Naive thymus-derived CD8-positive, alpha-beta T cell (primary cell): ENCODE measurements at regions of chr11 and their contacts with region 1.

Region 1: GRCh38 chr11:66081505-66081904 is 11.4 kb downstream of the PACS1 start:
- DNase-seq: peak; percentile 53 to 90 (median 77)
- ATAC-seq: peak; percentile 86 to 98
- H3K4me3 Mint-ChIP-seq: peak overlapping the region; percentile 75 to 94 (median 90)
- H3K27ac Mint-ChIP-seq: peak overlapping the region; percentile 93 to 100 (median 98)
- H3K4me1 Mint-ChIP-seq: peaks cover 46 to 97% (median 92%) of the 10 kb centered on the region in 4 donors
- H3K27me3 Mint-ChIP-seq: no peaks in the 10 kb centered on the region

Region 2: GRCh38 chr11:66051766-66052663 is 29.5 kb before region 1 on chr11 and contains the start of gene SF3B2:
- POLR2A ChIA-PET with region 1: interaction called, 11 read pairs
- DNase-seq: peak; percentile 88 to 97 (median 94)
- ATAC-seq: peak; percentile 95 to 97
- H3K4me3 Mint-ChIP-seq: peak within 1 kb of the TSS; percentile 98 to 100 (median 99)
- H3K27ac Mint-ChIP-seq: peak within 1 kb of the TSS; percentile 95 to 99 (median 98)
- H3K4me1 Mint-ChIP-seq: peaks cover 19 to 44% (median 37%) of the 10 kb centered on the region in 4 donors
- H3K27me3 Mint-ChIP-seq: peaks cover 0 to 5% (median 0%) of the 10 kb centered on the region in 5 donors
- polyA plus RNA-seq, gene SF3B2: 70.3 to 115 (median 91.6) TPM

Region 3: DNA sequence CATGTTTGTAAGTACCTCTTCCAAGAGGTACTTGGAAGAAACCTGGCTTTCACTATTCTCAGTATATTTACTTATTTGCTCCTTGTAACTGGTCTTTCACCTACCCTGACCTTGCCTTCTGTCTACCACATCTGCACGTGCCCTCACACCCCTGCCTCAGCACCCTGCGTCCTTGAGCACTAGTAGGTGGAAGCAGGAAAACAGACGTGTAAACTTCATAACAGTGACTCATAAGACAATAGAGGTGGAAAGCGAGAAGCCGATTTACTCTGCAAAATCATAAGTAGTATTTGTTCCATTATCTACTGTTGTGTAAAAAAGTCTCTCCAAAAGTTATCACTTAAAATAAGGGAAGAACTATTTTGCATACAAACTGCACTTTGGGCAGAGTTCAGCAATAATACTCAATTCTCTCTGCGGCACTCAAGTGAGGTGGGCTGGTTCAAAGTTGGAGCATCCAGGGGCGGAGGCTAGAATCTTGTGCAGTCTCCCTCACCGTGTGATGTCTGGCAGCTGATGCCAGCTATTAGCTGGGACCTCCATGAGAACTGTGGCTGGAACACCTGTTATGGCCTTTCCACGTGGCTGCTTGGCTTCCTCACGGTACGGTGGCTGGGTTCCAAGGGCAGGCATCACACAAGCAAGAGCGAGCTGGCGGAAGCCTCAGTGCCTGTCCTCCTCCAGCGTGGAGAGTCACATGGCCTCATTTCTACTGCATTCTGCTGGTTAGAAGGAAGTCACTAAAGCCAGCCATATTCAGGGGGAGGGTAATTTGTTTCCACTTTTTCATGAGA is 19.0 kb after region 1 on chr11:
- POLR2A ChIA-PET with region 1: interaction called, 91 read pairs
- DNase-seq: peak; percentile 48 to 85 (median 70)
- ATAC-seq: peak; percentile 94 to 98
- H3K4me3 Mint-ChIP-seq: peak overlapping the region; percentile 75 to 90 (median 86)
- H3K27ac Mint-ChIP-seq: peak overlapping the region; percentile 91 to 98 (median 95)
- H3K4me1 Mint-ChIP-seq: peaks cover 41 to 81% (median 72%) of the 10 kb centered on the region in 4 donors
- H3K27me3 Mint-ChIP-seq: no peaks in the 10 kb centered on the region

Region 4: DNA sequence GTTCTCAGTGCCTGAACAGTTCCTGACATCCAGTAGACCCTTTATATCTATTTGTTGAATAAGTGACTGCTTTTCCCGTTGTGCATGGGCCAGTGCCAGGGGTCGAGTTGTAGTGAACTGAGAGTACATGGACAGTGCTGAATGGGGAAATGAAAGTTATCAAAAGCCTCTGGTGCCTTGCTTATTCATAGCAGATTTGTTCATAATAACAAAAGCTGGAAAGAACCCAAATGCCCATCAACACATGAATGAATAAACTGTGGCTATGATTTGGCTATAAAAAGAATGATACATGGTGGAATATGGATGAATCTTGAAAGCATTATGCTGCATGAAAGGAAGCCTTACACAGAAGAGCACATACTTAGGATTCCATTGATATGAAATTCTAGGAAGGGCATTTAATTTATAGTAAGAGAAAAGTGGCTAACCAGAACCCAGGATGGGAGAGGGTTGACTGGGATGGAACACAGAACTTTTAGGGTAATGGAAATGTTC is 31.1 kb after region 1 on chr11:
- POLR2A ChIA-PET with region 1: interaction called, 27 read pairs
- DNase-seq: no peak
- ATAC-seq: no peak
- H3K4me3 Mint-ChIP-seq: peak overlapping the region in 8 of 10 donors; percentile 41 to 78 (median 69)
- H3K27ac Mint-ChIP-seq: peak overlapping the region; percentile 74 to 96 (median 86)
- H3K4me1 Mint-ChIP-seq: peaks cover 51 to 99% (median 96%) of the 10 kb centered on the region in 4 donors
- H3K27me3 Mint-ChIP-seq: no peaks in the 10 kb centered on the region

Region 5: DNA sequence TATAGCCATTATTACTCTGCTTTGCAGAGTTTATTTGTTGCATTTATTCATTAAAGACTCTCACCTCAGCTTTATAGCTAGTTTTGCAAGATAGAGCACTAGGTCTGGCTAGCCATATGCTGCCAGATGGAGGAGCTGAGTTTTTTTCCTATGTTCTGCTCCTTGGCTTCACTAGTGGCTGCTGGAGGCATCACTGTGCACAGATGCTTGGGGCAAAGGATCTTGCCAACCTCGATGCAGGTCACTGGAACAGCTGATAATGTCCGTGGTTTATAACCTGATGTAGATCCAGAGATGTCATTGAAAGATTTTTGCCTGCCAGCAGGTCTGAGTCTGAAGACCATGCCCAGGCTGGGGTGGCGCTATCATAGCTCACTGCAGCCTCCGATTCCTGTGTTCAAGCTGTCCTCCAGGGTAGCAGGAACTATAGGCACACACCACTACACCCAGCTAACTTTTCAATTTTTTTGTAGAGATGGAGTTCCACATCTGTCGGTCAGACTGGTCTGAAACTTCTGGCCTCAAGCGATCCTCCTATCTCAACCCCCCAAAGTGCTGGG is 51.8 kb after region 1 on chr11:
- POLR2A ChIA-PET with region 1: interaction called, 15 read pairs
- DNase-seq: no peak
- ATAC-seq: no peak
- H3K4me3 Mint-ChIP-seq: no peak overlapping the region
- H3K27ac Mint-ChIP-seq: peak overlapping the region in 9 of 10 donors; percentile 9 to 89 (median 71)
- H3K4me1 Mint-ChIP-seq: peaks cover 33 to 78% (median 68%) of the 10 kb centered on the region in 4 donors
- H3K27me3 Mint-ChIP-seq: no peaks in the 10 kb centered on the region